Right cardiac atrium (tissue), 5 donors: ENCODE measurements at regions of chr9 and their contacts with region 1.

Region 1: DNA sequence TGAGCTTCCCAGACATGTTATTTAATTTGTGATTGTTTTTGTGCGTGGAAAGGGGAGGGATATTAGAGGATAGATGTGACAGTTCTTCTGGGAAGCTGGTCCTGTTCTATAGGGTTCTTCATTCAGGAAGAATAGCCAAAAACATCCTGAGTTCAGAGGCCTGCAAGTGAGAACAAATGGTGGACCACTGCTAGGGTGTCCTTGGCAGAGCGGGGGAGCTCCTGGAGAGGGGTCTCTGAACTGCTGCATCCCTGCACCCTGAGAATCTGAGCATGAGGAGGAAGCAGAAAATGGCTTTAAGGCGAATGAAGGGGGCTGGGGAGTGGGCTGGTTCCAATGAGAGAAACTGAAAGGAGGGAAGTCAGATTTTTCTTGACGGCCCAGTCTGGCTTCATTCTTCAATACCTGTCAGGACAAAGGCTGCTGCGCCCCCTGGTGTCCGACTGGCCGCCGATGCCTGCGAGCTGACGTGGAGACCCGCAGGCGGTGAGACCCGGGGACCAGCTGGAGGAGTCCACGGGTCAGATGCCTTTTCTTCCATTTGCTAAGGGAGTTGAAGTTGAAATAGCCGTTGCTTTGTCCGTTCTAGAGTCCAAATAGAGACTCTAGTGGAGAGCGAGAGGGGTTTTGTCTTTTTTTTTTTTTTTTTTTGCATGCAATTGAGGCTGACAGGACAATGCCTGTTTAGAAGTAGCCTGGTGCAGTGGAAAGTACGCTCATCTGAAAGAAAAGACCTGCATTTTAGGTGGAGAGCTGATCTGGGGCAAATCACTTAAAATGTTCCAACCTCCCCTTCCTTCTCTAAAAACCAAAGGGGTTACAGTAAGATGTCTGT is 39.5 kb upstream of the NFIB start:
- DNase-seq: peak; percentile 93 to 99 (median 98)
- ATAC-seq: peak; percentile 74 to 80
- H3K4me3 ChIP-seq: no peak overlapping the region
- H3K27ac ChIP-seq: peak overlapping the region; percentile 58
- H3K4me1 ChIP-seq: peaks cover 9% of the 10 kb centered on the region
- H3K27me3 ChIP-seq: no peaks in the 10 kb centered on the region

Region 2: DNA sequence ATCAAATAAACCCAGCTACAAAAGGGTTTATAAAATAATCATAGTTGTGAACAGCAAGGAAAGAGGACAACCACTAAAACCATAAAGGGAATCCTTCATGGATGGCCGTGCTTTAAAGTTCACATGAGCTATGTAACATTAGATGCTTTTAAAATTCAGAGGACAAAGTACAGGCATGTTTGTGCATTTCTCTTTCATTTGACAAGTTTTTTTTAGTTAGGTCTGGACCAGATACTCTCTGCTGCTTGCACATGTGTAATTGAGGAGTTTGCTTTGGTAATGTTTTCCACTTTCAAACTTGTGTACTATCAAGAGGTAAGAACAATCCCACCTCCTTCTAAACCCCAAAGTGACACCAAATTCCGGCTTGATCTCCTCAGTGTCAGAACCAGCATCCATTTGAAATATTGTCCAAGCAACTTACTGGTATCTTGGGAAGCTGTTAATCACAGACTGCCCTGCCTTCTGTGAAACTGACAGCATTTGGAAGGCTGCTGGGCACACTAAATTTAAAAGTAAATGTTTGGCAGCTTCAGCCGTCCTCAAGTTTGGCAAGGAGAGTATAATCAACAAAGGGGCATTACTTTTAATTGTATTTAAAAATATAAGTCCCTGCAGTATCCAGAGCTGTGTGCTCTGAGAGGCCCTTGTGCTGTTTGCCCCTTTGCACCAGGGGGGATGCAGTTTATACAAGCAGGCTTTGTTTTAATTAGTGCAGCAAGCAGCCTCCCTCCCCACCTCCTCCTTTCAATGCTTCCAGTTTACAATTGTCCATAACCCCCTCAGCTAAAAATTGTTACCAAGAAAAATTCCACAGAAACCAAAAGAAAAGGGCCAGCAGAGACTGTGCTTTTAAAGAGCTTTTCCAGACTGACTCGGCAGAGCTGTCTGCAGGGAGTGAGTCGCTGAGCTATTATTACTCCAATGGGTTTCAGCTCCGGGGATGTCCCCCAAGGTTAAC is 745.7 kb before region 1 on chr9:
- intact Hi-C with region 1: loop called in 1 of 4 experiments (anchors 10 kb)
- DNase-seq: no peak
- ATAC-seq: peak; percentile 73 to 85
- H3K4me3 ChIP-seq: peak overlapping the region; percentile 53
- H3K27ac ChIP-seq: peak overlapping the region; percentile 94
- H3K4me1 ChIP-seq: no peaks in the 10 kb centered on the region
- H3K27me3 ChIP-seq: no peaks in the 10 kb centered on the region

Region 3: DNA sequence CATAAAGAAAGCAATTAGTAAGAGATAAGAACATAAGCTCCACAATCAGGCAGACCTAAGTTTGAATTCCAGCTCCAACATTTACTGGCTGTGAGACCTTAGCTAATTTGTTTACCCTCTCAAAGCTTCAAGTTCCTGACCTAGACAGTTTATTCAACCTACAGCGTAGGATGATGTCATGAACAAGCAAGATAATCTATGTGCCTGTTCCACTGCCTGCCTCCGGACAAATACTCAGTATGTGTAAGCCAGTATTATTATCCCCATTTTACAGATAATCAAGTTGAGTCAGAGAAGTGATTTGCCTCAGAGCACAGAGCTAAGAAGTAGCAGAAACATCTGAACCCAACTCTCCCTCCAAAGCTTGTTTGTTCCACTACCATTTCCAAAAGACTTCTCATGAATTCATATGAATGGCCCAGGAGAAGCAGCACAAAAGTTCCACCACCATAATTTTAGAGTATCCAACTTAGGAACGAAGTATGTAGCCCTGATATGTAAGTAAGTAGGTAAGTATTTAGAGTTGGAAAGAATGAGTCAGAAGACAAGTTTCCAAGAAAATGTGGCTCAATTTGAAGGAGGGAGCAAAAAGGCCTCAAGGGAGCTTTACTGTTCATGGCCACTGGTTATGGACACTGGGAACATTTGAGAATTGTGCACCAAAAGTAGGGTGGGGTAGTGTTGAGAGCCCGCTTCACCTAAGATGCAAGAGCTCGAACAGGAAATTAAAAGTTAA is 437.7 kb before region 1 on chr9:
- intact Hi-C with region 1: loop called in 1 of 4 experiments (anchors 10 kb)
- DNase-seq: no peak
- ATAC-seq: peak in 1 of 2 donors; percentile 18
- H3K4me3 ChIP-seq: no peak overlapping the region
- H3K27ac ChIP-seq: no peak overlapping the region
- H3K4me1 ChIP-seq: peaks cover 4% of the 10 kb centered on the region
- H3K27me3 ChIP-seq: no peaks in the 10 kb centered on the region

Region 4: GRCh38 chr9:14146201-14146874 is 207.1 kb before region 1 on chr9:
- intact Hi-C with region 1: no loop called
- DNase-seq: no peak
- ATAC-seq: no peak
- H3K4me3 ChIP-seq: no peak overlapping the region
- H3K27ac ChIP-seq: no peak overlapping the region
- H3K4me1 ChIP-seq: no peaks in the 10 kb centered on the region
- H3K27me3 ChIP-seq: no peaks in the 10 kb centered on the region

Region 5: DNA sequence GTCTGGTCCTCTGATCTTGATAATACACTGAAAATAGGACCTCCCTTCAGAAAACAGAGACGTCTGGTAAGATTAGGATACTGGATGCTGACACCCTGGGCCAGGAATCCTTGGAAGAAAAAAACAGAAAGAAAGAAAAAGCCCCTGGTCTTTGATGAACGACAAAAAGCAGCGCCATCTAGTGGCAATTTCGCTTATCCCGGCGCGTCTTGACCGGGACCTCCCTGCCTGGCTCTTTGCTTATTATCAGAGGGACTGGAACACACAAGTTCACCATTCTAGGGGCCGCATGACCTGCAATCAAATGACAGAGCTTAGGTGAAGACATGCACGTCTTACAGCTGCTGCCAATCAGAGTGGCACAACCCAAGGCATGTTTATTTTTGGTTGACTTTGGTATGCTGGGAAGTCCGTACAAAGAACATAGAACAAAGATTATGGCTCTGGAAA is 75.4 kb after region 1 on chr9:
- intact Hi-C with region 1: loop called in 1 of 4 experiments (anchors 10 kb)
- DNase-seq: peak; percentile 77 to 85 (median 84)
- ATAC-seq: peak; percentile 73 to 76
- H3K4me3 ChIP-seq: no peak overlapping the region
- H3K27ac ChIP-seq: no peak overlapping the region
- H3K4me1 ChIP-seq: peaks cover 3% of the 10 kb centered on the region
- H3K27me3 ChIP-seq: no peaks in the 10 kb centered on the region